ENCODE measurements at regions of chr11 and their contacts with region 1.

Region 1: GRCh38 chr11:120335908-120336640 is at the start of gene ARHGEF12:
- DNase-seq: peak; percentile 98
- ATAC-seq: peak; percentile 34 to 86 (median 74)
- H3K4me3 ChIP-seq: peak within 1 kb of the TSS; percentile 59 to 99 (median 90)
- H3K27ac ChIP-seq: peak within 1 kb of the TSS; percentile 91 to 100 (median 98)
- H3K4me1 ChIP-seq: peaks cover 0 to 67% (median 45%) of the 10 kb centered on the region in 12 donors
- H3K27me3 ChIP-seq: peaks cover 0 to 50% (median 0%) of the 10 kb centered on the region in 9 donors
- CTCF ChIP-seq: peak in 9 of 12 donors; percentile 5 to 66 (median 34)
- POLR2A ChIP-seq: peak in 1 of 2 donors; percentile 64
- total RNA-seq, gene ARHGEF12: 79.3 to 140 (median 114) TPM

Region 2: GRCh38 chr11:120385110-120385509 is 49.0 kb after region 1 on chr11:
- intact Hi-C with region 1: loop called in 3 of 10 experiments (anchors 5 to 10 kb)
- DNase-seq: no peak
- ATAC-seq: no peak
- H3K4me3 ChIP-seq: no peak overlapping the region
- H3K27ac ChIP-seq: peak overlapping the region in 3 of 12 donors; percentile 5 to 21 (median 21)
- H3K4me1 ChIP-seq: peaks cover 6 to 70% (median 38%) of the 10 kb centered on the region in 12 donors
- H3K27me3 ChIP-seq: no peaks in the 10 kb centered on the region
- CTCF ChIP-seq: no peak
- POLR2A ChIP-seq: no peak

Region 3: DNA sequence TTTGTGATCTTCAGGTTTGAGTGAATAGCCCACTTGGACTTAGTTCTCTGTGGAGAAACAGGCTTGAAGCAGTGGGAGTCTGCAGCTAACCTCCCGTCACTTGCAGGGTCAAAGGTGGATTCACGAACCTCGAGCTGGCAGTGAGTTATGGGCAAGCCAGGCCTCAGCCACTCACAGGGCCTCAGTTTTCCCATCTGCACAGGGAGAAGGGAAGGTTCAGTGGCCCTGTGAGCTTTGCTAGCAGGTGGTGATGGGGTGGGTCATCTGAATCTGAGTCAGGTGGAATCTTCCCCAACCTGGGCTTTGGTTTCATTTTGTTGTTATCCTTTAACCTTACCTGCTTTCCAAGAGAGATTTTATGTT is 88.9 kb after region 1 on chr11:
- intact Hi-C with region 1: loop called in 9 of 10 experiments (anchors 5 to 10 kb)
- DNase-seq: no peak
- ATAC-seq: no peak
- H3K4me3 ChIP-seq: no peak overlapping the region
- H3K27ac ChIP-seq: no peak overlapping the region
- H3K4me1 ChIP-seq: peaks cover 0 to 7% (median 0%) of the 10 kb centered on the region in 12 donors
- H3K27me3 ChIP-seq: no peaks in the 10 kb centered on the region
- CTCF ChIP-seq: no peak
- POLR2A ChIP-seq: no peak

Region 4: GRCh38 chr11:120471131-120471530 is 135.1 kb after region 1 on chr11:
- intact Hi-C with region 1: loop called in 1 of 10 experiments (anchors 10 kb)
- DNase-seq: no peak
- ATAC-seq: no peak
- H3K4me3 ChIP-seq: no peak overlapping the region
- H3K27ac ChIP-seq: no peak overlapping the region
- H3K4me1 ChIP-seq: peaks cover 0 to 8% (median 0%) of the 10 kb centered on the region in 12 donors
- H3K27me3 ChIP-seq: no peaks in the 10 kb centered on the region
- CTCF ChIP-seq: no peak
- POLR2A ChIP-seq: no peak

Region 5: DNA sequence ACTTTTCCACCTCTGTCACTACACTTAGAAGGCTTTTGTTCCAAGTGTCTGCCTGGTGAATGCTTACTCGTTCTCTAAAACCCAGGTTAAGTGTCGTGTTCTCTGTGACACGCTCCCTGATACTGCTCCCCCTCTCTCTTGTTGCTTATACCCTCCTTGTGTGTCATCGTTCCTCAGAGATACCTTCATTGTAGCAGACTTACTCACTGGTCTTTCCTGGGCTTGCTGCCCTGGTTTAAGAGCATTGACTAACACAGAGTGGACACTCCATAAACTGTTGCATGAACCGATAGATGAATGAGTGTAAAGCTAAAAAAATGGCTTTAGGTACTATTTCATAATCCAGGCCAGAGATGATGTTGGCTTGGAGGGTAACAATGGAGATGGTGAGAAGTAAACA is 346.8 kb after region 1 on chr11:
- intact Hi-C with region 1: loop called in 1 of 10 experiments (anchors 10 kb)
- DNase-seq: no peak
- ATAC-seq: no peak
- H3K4me3 ChIP-seq: no peak overlapping the region
- H3K27ac ChIP-seq: no peak overlapping the region
- H3K4me1 ChIP-seq: no peaks in the 10 kb centered on the region
- H3K27me3 ChIP-seq: peaks cover 0 to 58% (median 8%) of the 10 kb centered on the region in 9 donors
- CTCF ChIP-seq: no peak
- POLR2A ChIP-seq: no peak